Ascending aorta (tissue), 2 donors: ENCODE measurements at regions of chr1 and their contacts with region 1.

Region 1: GRCh38 chr1:67053785-67054772 is at the start of gene SLC35D1:
- DNase-seq: peak; percentile 11 to 84
- H3K4me3 ChIP-seq: peak within 1 kb of the TSS; percentile 76 to 89
- H3K27ac ChIP-seq: peak within 1 kb of the TSS; percentile 93
- H3K4me1 ChIP-seq: peaks cover 3 to 17% of the 10 kb centered on the region in 2 donors
- H3K27me3 ChIP-seq: no peaks in the 10 kb centered on the region
- CTCF ChIP-seq: no peak
- total RNA-seq, gene SLC35D1: 3.7 TPM

Region 2: GRCh38 chr1:66929999-66930822 is 123.9 kb before region 1 on chr1:
- intact Hi-C with region 1: loop called (anchors 5 kb)
- DNase-seq: peak; percentile 90 to 98
- H3K4me3 ChIP-seq: peak overlapping the region; percentile 74 to 97
- H3K27ac ChIP-seq: peak overlapping the region; percentile 95 to 100
- H3K4me1 ChIP-seq: peaks cover 0 to 36% of the 10 kb centered on the region in 2 donors
- H3K27me3 ChIP-seq: no peaks in the 10 kb centered on the region
- CTCF ChIP-seq: peak in 2 of 3 experiments; percentile 21 to 31

Region 3: DNA sequence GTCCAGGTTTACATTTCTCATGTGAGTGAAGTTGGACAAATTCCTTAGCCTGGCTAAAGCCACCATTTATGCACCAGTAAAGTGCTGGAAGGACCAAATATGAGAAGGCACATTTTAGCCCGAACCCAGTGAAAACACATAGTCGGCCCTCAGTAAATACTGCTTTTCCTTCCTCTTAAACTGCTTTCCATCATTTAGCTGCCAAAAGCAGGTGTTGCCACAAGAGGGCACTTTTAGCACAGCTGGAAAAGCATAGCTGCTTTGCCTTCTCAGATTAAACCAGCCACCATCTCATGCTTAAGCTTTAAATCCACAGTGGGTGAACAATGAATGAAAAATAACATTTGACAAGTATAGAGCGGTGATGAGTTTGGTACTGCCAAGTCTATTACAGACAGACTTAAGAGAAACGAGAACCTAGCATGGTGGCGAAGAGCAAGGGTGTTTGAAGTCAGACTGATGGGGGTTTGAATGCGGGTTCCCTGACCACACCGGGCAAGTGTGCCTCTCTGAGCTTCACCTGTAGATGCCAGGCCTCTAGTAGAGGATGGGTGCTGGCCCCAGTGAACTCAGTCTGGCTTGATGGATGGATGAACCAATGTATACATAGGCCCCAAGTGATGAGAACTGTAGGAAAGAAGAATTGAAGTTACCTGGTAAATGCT is 57.9 kb before region 1 on chr1:
- intact Hi-C with region 1: loop called (anchors 5 kb)
- DNase-seq: peak in 1 of 2 donors; percentile 80
- H3K4me3 ChIP-seq: no peak overlapping the region
- H3K27ac ChIP-seq: no peak overlapping the region
- H3K4me1 ChIP-seq: peaks cover 0 to 3% of the 10 kb centered on the region in 2 donors
- H3K27me3 ChIP-seq: no peaks in the 10 kb centered on the region
- CTCF ChIP-seq: peak; percentile 77 to 88 (median 80)

Region 4: GRCh38 chr1:67019600-67020136 is 34.4 kb before region 1 on chr1:
- intact Hi-C with region 1: loop called (anchors 2 kb)
- DNase-seq: peak in 1 of 2 donors; percentile 77
- H3K4me3 ChIP-seq: no peak overlapping the region
- H3K27ac ChIP-seq: peak overlapping the region; percentile 87 to 90
- H3K4me1 ChIP-seq: peaks cover 0 to 33% of the 10 kb centered on the region in 2 donors
- H3K27me3 ChIP-seq: no peaks in the 10 kb centered on the region
- CTCF ChIP-seq: no peak

Region 5: GRCh38 chr1:67149179-67149770 is 95.2 kb after region 1 on chr1:
- intact Hi-C with region 1: loop called (anchors 5 kb)
- DNase-seq: peak in 1 of 2 donors; percentile 73
- H3K4me3 ChIP-seq: no peak overlapping the region
- H3K27ac ChIP-seq: no peak overlapping the region
- H3K4me1 ChIP-seq: peaks cover 0 to 3% of the 10 kb centered on the region in 2 donors
- H3K27me3 ChIP-seq: no peaks in the 10 kb centered on the region
- CTCF ChIP-seq: peak; percentile 67 to 84 (median 77)